Caco-2 (cell line): ENCODE measurements at regions of chr6 and their contacts with region 1.

Region 1: GRCh38 chr6:134199848-134200606 is 117.9 kb downstream of the SGK1 start:
- DNase-seq: peak; percentile 56 to 69
- H3K4me3 ChIP-seq: no peak overlapping the region
- H3K4me3 Mint-ChIP-seq: peak overlapping the region; percentile 37
- H3K27ac Mint-ChIP-seq: peak overlapping the region; percentile 58
- H3K4me1 ChIP-seq: peaks cover 56% of the 10 kb centered on the region
- H3K4me1 Mint-ChIP-seq: peaks cover 7% of the 10 kb centered on the region
- H3K27me3 ChIP-seq: no peaks in the 10 kb centered on the region
- H3K27me3 Mint-ChIP-seq: no peaks in the 10 kb centered on the region
- CTCF ChIP-seq: no peak

Region 2: DNA sequence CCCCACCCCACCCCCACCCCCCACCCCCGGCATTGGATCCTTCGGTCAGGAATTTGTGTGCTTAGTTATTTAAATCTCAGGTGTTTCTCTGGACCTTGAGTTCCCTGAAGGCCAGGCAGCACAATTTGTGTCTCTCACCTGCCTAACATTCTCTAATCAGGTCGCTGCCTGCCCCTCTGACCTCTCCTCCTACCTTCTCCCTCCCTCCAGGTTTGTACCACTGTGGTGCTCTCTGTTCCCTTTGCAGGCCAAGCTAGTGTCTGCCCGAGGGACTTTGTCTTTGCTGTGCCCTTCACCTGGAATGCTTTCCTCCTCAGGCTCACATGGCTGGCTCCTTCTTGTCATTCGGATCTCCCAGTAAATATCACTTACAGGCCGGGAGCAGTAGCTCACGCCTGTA is 16.2 kb before region 1 on chr6:
- CTCF ChIA-PET with region 1: interaction called, 6 read pairs
- POLR2A ChIA-PET with region 1: no interaction called
- intact Hi-C with region 1: loop called (anchors 1 kb)
- DNase-seq: peak; percentile 39 to 71
- H3K4me3 ChIP-seq: no peak overlapping the region
- H3K4me3 Mint-ChIP-seq: peak overlapping the region; percentile 7
- H3K27ac Mint-ChIP-seq: peak overlapping the region; percentile 86
- H3K4me1 ChIP-seq: peaks cover 32% of the 10 kb centered on the region
- H3K4me1 Mint-ChIP-seq: peaks cover 38% of the 10 kb centered on the region
- H3K27me3 ChIP-seq: no peaks in the 10 kb centered on the region
- H3K27me3 Mint-ChIP-seq: no peaks in the 10 kb centered on the region
- CTCF ChIP-seq: no peak

Region 3: DNA sequence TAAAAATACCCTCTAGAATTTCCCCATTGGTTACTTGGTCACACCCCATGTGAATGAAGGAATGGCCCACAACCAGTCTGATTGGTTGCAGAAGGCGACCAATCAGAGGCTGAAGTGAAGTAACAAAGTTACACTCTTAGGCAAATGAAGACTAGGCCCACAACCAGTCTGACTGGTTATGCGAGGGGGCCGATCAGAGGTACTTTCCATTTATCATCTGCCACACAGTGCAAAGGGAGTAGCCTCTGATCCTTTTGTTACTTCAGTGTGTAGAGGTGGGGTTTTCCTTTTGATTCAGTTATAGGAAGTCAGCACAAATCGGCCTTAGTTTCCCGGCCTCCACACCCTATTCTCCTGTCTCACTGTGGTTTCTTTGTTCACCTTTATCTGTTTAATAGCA is 179.1 kb after region 1 on chr6:
- CTCF ChIA-PET with region 1: no interaction called
- POLR2A ChIA-PET with region 1: no interaction called
- intact Hi-C with region 1: loop called (anchors 2 kb)
- DNase-seq: peak; percentile 89 to 90
- H3K4me3 ChIP-seq: no peak overlapping the region
- H3K4me3 Mint-ChIP-seq: peak overlapping the region; percentile 58
- H3K27ac Mint-ChIP-seq: peak overlapping the region; percentile 40
- H3K4me1 ChIP-seq: peaks cover 17% of the 10 kb centered on the region
- H3K4me1 Mint-ChIP-seq: peaks cover 21% of the 10 kb centered on the region
- H3K27me3 ChIP-seq: no peaks in the 10 kb centered on the region
- H3K27me3 Mint-ChIP-seq: no peaks in the 10 kb centered on the region
- CTCF ChIP-seq: no peak

Region 4: DNA sequence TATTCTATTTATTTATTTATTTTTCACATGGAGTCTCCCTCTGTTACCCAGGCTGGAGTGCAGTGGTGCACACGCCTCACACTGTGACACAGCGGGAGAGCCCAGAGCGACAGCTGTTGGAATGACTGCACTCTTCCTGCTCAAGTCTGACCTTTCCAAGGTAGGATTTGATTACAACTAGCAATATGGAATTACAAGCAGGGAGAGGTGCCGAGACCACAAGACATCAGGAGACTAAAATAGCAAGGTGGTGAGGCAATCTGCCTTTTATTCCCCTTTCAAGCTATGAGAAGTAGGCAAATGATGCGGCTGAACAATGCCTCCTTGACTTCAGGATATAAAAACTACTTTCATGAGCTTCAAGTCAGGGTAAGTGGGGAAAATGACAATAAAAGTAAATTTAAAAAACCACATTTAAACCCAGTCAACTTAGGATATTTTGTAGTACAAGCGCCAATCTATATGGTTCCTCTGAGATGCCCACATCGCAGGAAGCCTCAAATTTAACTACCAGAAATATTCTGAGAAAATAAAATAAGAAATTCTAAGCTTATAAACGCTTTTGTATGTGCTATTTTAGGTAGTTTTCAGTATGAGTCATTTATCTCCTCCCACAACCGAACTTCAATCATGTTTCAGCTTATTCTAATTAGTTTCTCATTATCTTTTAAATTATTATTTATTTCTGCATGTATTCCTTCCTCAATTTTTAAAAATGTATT is 264.8 kb after region 1 on chr6:
- CTCF ChIA-PET with region 1: no interaction called
- POLR2A ChIA-PET with region 1: no interaction called
- intact Hi-C with region 1: no loop called
- DNase-seq: no peak
- H3K4me3 ChIP-seq: no peak overlapping the region
- H3K4me3 Mint-ChIP-seq: no peak overlapping the region
- H3K27ac Mint-ChIP-seq: no peak overlapping the region
- H3K4me1 ChIP-seq: peaks cover 22% of the 10 kb centered on the region
- H3K4me1 Mint-ChIP-seq: peaks cover 9% of the 10 kb centered on the region
- H3K27me3 ChIP-seq: no peaks in the 10 kb centered on the region
- H3K27me3 Mint-ChIP-seq: no peaks in the 10 kb centered on the region
- CTCF ChIP-seq: no peak